ENCODE measurements at regions of chr2 and their contacts with region 1.

Region 1: GRCh38 chr2:120343433-120344105 is 2.4 kb upstream of the INHBB start:
- DNase-seq: peak; percentile 75
- H3K4me3 Mint-ChIP-seq: peak overlapping the region; percentile 26
- H3K27ac Mint-ChIP-seq: no peak overlapping the region
- H3K4me1 Mint-ChIP-seq: peaks cover 25% of the 10 kb centered on the region
- H3K27me3 Mint-ChIP-seq: peaks cover 93% of the 10 kb centered on the region

Region 2: DNA sequence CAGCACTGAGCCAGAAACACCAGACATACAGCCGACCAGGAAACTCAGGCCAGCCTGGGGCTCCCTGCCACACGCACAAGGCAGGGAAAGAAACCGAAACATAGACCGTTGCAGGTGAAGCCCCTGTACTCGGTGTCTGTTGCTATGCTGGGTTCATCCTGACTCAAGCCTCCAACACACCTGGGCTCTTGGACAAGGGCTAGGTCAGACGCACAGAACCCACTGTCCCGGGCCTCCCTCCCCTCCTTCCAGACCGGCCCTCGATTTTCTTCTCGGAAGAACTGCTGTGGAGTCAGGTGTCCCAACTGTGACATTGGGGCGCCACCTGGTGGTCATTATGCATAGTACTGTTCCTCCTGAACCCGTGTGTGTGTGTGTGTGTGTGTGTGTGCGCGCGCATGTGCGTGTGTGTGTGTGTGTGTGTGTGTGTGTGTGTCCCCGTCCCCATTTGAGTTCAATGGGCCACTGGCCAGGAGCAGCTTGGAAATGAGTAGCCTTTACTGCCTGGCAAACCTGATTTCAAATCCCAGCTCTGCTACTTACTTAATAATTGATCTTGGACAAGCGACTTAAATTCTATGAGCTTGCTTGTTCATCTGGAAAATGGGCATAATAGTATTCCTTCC is 336.7 kb after region 1 on chr2:
- CTCF ChIA-PET with region 1: interaction called, 26 read pairs
- DNase-seq: peak; percentile 84
- H3K4me3 Mint-ChIP-seq: no peak overlapping the region
- H3K27ac Mint-ChIP-seq: no peak overlapping the region
- H3K4me1 Mint-ChIP-seq: no peaks in the 10 kb centered on the region
- H3K27me3 Mint-ChIP-seq: peaks cover 56% of the 10 kb centered on the region

Measured in activated naive CD4-positive, alpha-beta T cell treated with anti-CD3 and anti-CD28 coated beads, Interleukin-2, amount 10 ng/mL, durations not matched to agents 7 days and 5 days (primary cell).